ENCODE measurements at regions of chr15 and their contacts with region 1.

Region 1: GRCh38 chr15:41811432-41812195 is 16.3 kb upstream of the JMJD7 start:
- DNase-seq: peak; percentile 83 to 95 (median 87)
- H3K4me3 ChIP-seq: no peak overlapping the region
- H3K27ac ChIP-seq: no peak overlapping the region
- H3K4me1 ChIP-seq: peaks cover 0 to 4% of the 10 kb centered on the region in 2 donors
- H3K27me3 ChIP-seq: no peaks in the 10 kb centered on the region
- CTCF ChIP-seq: peak; percentile 81 to 94 (median 88)
- POLR2A ChIP-seq: no peak

Region 2: DNA sequence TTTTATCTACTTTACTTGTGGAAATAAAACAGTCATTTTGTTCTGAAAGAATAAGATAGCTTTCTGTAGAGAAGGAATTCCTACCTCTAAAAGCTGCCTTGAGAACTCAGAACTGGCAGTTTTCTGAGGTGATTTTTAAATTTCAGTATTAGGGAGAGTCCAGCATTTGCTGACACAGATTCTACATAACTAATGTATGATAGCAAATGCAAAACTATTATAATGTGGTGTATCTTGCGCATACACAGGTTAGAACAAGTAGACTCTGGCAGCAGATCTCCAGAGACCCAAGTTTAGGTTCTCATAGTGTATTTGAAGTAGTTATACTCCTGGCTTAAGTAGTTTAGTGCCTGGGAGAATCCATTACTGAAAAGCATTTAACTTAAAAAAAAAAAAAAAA is 510.0 kb before region 1 on chr15:
- intact Hi-C with region 1: no loop called
- DNase-seq: no peak
- H3K4me3 ChIP-seq: no peak overlapping the region
- H3K27ac ChIP-seq: no peak overlapping the region
- H3K4me1 ChIP-seq: no peaks in the 10 kb centered on the region
- H3K27me3 ChIP-seq: no peaks in the 10 kb centered on the region
- CTCF ChIP-seq: no peak
- POLR2A ChIP-seq: no peak

Region 3: DNA sequence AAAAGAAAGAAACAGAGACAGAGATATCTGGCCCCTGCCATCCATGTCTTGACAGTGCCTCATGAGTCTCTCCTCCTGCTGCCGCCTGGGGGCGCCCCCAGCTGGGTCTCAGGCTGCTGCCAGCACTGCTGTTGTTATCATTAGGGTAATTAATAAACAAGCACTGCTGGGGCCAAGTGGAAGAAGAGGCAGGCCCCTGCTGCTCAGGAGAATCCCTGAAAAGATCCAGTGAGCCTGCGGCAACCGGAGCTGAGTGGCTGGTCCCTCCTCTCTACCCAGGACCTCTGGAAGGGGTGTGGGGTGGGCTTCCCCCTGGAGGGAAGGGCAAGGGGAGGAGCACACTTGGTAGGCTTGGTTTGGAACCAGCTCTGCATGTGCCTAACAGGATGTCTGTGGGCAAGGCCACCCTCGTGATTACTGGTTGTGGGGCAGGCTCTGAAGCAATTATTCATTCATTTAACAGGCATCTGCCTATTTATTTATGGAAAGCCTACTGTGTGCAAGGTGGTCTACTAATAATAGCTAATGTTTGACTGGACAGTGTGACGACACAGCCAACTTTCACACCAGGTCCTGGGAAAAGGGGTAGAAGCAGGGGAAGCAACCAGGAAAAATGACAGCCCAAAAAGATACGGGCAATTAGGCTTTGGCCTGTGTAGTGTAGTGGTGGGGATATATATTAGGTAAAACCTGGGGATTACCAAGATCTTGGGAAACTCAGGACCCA is 253.8 kb before region 1 on chr15:
- intact Hi-C with region 1: loop called in 1 of 2 experiments (anchors 5 kb)
- DNase-seq: peak; percentile 70 to 87 (median 80)
- H3K4me3 ChIP-seq: peak overlapping the region in 1 of 4 donors; percentile 88
- H3K27ac ChIP-seq: peak overlapping the region in 3 of 5 donors; percentile 27 to 72 (median 39)
- H3K4me1 ChIP-seq: peaks cover 9 to 22% of the 10 kb centered on the region in 2 donors
- H3K27me3 ChIP-seq: no peaks in the 10 kb centered on the region
- CTCF ChIP-seq: peak; percentile 69 to 88 (median 80)
- POLR2A ChIP-seq: no peak

Region 4: DNA sequence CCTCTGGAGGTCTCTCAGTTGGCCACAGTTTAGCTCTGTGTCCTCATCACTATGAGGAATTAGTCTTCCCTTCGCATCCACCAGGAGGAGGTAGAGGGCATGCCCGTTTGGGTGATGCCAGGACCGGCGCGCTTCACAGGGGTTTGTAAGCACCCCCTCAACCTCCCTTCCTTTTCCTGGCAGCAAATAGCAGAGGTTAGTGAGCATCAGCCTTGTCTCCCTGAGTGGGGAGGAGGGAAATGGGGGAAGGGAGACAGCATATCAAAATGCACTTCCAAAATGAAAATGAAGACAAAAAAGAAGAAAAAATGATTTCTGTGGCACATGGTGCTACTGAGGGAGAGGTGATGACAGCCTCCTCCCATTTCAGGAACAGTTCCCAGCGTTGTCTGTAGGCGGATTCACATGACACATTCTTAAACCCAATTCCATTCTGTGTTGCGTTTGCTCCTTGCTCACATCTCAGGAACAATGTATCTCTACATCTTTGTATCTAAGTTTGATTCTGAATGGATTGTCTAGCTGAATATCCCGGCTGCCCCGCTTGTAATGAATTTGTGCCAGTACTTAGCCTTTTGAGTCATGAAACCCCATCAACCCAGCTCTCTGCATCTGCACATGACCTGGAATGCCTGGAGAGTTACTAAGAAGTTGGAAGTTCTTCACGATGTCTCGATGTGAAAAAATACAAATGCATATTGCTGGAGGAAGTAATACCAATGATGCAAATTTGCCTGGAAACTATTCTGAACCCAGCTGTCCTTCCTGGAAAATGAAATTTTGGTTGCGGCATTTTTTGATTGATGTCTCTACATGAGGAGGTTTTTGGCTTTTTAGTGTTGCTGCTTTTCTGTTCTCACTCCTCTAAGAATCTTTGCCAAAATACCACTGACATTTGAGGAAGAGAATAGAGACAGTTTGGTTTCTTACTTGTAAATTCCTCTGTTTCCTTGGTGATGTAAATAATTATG is 207.4 kb before region 1 on chr15:
- intact Hi-C with region 1: loop called in 1 of 2 experiments (anchors 5 kb)
- DNase-seq: peak; percentile 60 to 83 (median 75)
- H3K4me3 ChIP-seq: peak overlapping the region in 1 of 4 donors; percentile 24
- H3K27ac ChIP-seq: peak overlapping the region in 1 of 5 donors; percentile 6
- H3K4me1 ChIP-seq: peaks cover 0 to 13% of the 10 kb centered on the region in 2 donors
- H3K27me3 ChIP-seq: no peaks in the 10 kb centered on the region
- CTCF ChIP-seq: peak; percentile 61 to 83 (median 76)
- POLR2A ChIP-seq: no peak

Region 5: GRCh38 chr15:41774062-41774881 is 37.3 kb before region 1 on chr15 and contains the start of gene MAPKBP1:
- intact Hi-C with region 1: loop called (anchors 2 to 5 kb)
- DNase-seq: peak; percentile 97 to 99 (median 98)
- H3K4me3 ChIP-seq: peak within 1 kb of the TSS; percentile 33 to 72 (median 54)
- H3K27ac ChIP-seq: peak within 1 kb of the TSS; percentile 60 to 87 (median 72)
- H3K4me1 ChIP-seq: peaks cover 38 to 59% of the 10 kb centered on the region in 2 donors
- H3K27me3 ChIP-seq: no peaks in the 10 kb centered on the region
- CTCF ChIP-seq: peak; percentile 33 to 65 (median 48)
- POLR2A ChIP-seq: peak in 1 of 2 donors; percentile 70
- total RNA-seq, gene MAPKBP1: 10.1 to 48.2 (median 25.7) TPM

Region 6: DNA sequence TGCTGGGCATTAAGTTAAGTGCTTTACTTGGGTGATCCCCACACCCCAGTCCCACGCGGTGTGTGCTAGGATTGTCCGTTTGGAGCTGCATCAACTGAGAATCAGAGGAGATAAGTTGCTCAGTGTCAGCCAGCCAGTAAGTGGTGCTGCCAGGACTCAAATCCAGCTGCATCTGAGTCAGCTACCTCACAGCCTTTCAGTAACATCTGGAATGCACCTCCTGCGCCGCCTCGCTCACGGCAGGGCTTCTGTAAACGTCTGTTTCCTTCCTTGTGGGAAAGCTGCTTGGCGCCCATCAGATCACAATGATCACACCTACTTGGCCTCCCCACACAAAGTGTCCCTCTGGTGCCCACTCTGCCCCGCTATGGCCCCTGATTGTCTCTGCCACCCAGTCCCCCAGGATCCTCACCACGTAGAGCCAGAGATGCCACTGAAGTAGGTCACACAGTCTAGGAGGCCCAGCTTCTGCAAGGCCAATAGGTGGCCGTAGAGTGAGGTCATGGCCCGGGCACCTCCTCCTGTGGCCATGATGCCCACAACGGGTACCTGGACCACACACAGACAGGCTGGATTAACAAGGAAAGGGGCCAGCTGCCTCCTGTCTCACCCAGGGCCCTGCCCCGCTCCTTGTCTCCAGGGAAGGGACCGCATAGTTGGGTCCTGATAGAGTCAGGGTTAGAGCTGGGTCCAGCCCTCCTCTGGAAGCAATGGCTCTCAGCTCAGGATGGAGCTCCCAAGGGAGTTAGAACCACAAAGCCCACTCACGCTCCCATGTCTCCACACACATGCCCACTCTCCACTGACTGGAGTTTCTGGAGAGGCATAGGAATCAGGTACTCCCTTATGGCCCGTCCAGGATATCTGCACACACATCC is 269.2 kb after region 1 on chr15:
- intact Hi-C with region 1: no loop called
- DNase-seq: peak in 1 of 7 donors; percentile 36
- H3K4me3 ChIP-seq: no peak overlapping the region
- H3K27ac ChIP-seq: no peak overlapping the region
- H3K4me1 ChIP-seq: peaks cover 0 to 9% of the 10 kb centered on the region in 2 donors
- H3K27me3 ChIP-seq: no peaks in the 10 kb centered on the region
- CTCF ChIP-seq: no peak
- POLR2A ChIP-seq: no peak

Measured in adrenal gland (tissue), 19 donors.